Activated CD4-positive, alpha-beta memory T cell treated with anti-CD3 and anti-CD28 coated beads for 36 hours (primary cell): ENCODE measurements at regions of chr18 and their contacts with region 1.

Region 1: GRCh38 chr18:69958422-69958821 is 10.7 kb upstream of the CD226 start:
- DNase-seq: peak; percentile 73
- H3K4me3 Mint-ChIP-seq: no peak overlapping the region
- H3K27ac Mint-ChIP-seq: no peak overlapping the region
- H3K4me1 Mint-ChIP-seq: peaks cover 20% of the 10 kb centered on the region
- H3K27me3 Mint-ChIP-seq: no peaks in the 10 kb centered on the region

Region 2: GRCh38 chr18:69636529-69637301 is 321.7 kb before region 1 on chr18:
- CTCF ChIA-PET with region 1: interaction called, 4 read pairs
- POLR2A ChIA-PET with region 1: no interaction called
- intact Hi-C with region 1: loop called (anchors 10 kb)
- DNase-seq: peak; percentile 31
- H3K4me3 Mint-ChIP-seq: no peak overlapping the region
- H3K27ac Mint-ChIP-seq: no peak overlapping the region
- H3K4me1 Mint-ChIP-seq: no peaks in the 10 kb centered on the region
- H3K27me3 Mint-ChIP-seq: no peaks in the 10 kb centered on the region

Region 3: GRCh38 chr18:69935319-69936190 is 22.9 kb before region 1 on chr18:
- CTCF ChIA-PET with region 1: interaction called, 16 read pairs
- POLR2A ChIA-PET with region 1: interaction called, 47 read pairs
- intact Hi-C with region 1: loop called (anchors 1 kb)
- DNase-seq: peak; percentile 94
- H3K4me3 Mint-ChIP-seq: no peak overlapping the region
- H3K27ac Mint-ChIP-seq: no peak overlapping the region
- H3K4me1 Mint-ChIP-seq: peaks cover 37% of the 10 kb centered on the region
- H3K27me3 Mint-ChIP-seq: no peaks in the 10 kb centered on the region

Region 4: GRCh38 chr18:69978732-69979715 is 20.6 kb after region 1 on chr18:
- CTCF ChIA-PET with region 1: interaction called, 4 read pairs
- POLR2A ChIA-PET with region 1: interaction called, 6 read pairs
- intact Hi-C with region 1: loop called (anchors 1 kb)
- DNase-seq: peak; percentile 25
- H3K4me3 Mint-ChIP-seq: no peak overlapping the region
- H3K27ac Mint-ChIP-seq: peak overlapping the region; percentile 65
- H3K4me1 Mint-ChIP-seq: peaks cover 45% of the 10 kb centered on the region
- H3K27me3 Mint-ChIP-seq: no peaks in the 10 kb centered on the region

Region 5: DNA sequence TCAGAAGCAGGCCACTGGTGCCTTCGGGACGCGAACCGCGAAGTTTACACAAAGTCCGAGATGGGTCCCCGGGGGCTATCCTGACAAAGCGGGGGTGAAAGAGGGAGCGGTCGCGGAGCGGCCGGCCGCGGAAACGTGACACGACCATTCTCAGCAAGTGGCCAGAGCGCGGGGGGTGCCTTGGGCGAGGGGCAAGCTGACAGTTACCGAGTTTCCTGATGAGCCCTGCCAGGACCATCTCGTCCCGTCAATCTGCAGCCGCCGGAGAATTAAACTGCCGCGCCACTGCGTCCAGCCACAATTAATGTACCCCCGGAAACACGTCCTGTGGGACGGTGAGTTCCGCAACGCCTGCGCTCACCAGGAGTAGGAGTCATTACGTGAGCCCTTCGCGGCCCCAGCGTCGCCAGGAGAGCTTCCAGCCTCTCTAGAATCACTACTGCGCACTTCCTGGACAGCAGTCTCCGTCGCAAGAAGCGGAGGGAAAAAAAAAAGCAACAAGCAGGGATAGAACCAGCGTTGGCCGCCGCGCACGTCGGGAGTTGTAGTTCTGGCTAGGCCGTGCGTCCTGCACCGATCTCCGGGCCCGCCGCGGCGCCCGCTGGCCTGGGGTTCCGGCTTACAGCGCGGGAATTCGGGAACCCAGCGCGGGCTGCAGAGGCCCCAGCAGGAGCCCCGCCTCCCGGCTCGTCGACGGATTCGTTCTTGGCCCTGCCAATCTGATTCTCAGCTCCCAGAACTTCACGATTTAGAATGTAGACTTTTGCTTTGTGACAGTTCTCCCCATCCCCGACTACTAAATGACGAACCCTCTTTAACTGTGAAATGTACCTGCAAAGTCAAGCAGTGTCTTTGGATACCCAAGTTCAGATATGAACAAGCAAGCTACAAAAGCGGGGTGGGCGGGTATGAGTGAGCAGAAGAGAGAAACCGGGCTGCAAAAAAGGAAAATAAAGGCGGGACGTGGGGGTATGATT is 247.3 kb after region 1 on chr18 and contains the start of gene RTTN:
- CTCF ChIA-PET with region 1: no interaction called
- POLR2A ChIA-PET with region 1: no interaction called
- intact Hi-C with region 1: loop called (anchors 5 kb)
- DNase-seq: peak; percentile 94
- H3K4me3 Mint-ChIP-seq: peak within 1 kb of the TSS; percentile 92
- H3K27ac Mint-ChIP-seq: peak within 1 kb of the TSS; percentile 99
- H3K4me1 Mint-ChIP-seq: peaks cover 30% of the 10 kb centered on the region
- H3K27me3 Mint-ChIP-seq: peaks cover 5% of the 10 kb centered on the region
- total RNA-seq, gene RTTN: 27.3 to 28.9 TPM